ENCODE measurements at regions of chr12 and their contacts with region 1.

Region 1: GRCh38 chr12:48618541-48618940 is 48.7 kb upstream of the LALBA start:
- DNase-seq: peak; percentile 79
- H3K4me3 Mint-ChIP-seq: no peak overlapping the region
- H3K27ac Mint-ChIP-seq: no peak overlapping the region
- H3K4me1 Mint-ChIP-seq: no peaks in the 10 kb centered on the region
- H3K27me3 Mint-ChIP-seq: peaks cover 61% of the 10 kb centered on the region
- CTCF ChIP-seq: peak; percentile 91

Region 2: GRCh38 chr12:48084066-48084465 is 534.5 kb before region 1 on chr12:
- CTCF ChIA-PET with region 1: interaction called, 3 read pairs
- POLR2A ChIA-PET with region 1: no interaction called
- intact Hi-C with region 1: loop called (anchors 10 kb)
- DNase-seq: peak; percentile 6
- H3K4me3 Mint-ChIP-seq: no peak overlapping the region
- H3K27ac Mint-ChIP-seq: no peak overlapping the region
- H3K4me1 Mint-ChIP-seq: no peaks in the 10 kb centered on the region
- H3K27me3 Mint-ChIP-seq: no peaks in the 10 kb centered on the region
- CTCF ChIP-seq: no peak

Region 3: DNA sequence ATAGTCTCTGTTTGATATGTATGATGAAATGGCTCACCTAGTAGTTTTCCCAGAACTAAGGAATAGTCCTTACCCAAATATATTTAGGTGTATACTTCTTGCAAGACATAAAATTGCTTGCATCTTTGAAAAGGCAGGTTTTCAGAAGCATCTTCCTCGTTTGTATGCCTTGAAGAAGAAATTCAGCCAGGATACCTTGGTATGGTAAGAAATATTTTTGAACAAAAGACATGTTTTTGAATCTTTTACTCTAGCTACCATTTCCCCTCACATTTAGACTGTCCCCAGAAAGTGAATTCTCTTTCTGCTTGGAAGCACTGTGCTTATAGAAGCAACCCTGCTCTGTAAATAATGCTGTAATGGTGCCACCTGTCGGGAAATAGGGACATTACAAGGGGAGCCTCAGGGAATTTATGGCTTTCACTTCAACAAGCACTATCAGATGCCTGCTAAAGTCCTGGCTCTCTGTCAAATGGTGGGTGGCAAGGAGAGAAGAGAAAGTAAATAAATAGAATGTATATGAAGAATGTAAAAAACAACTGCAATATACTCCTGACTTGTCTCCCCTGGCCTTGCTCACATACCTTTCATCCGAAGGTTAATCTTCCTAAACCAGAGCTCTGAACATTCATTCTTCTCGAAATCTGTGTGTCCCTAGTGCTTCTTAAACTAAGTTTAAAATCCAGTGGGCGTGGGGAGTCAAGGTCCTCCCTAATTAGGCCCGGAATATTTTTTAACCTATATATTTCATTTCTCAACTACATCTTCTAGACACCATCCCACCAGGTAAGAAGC is 429.0 kb before region 1 on chr12:
- CTCF ChIA-PET with region 1: interaction called, 6 read pairs
- POLR2A ChIA-PET with region 1: no interaction called
- intact Hi-C with region 1: loop called (anchors 5 kb)
- DNase-seq: peak; percentile 78
- H3K4me3 Mint-ChIP-seq: no peak overlapping the region
- H3K27ac Mint-ChIP-seq: no peak overlapping the region
- H3K4me1 Mint-ChIP-seq: peaks cover 5% of the 10 kb centered on the region
- H3K27me3 Mint-ChIP-seq: peaks cover 67% of the 10 kb centered on the region
- CTCF ChIP-seq: peak; percentile 78

Region 4: DNA sequence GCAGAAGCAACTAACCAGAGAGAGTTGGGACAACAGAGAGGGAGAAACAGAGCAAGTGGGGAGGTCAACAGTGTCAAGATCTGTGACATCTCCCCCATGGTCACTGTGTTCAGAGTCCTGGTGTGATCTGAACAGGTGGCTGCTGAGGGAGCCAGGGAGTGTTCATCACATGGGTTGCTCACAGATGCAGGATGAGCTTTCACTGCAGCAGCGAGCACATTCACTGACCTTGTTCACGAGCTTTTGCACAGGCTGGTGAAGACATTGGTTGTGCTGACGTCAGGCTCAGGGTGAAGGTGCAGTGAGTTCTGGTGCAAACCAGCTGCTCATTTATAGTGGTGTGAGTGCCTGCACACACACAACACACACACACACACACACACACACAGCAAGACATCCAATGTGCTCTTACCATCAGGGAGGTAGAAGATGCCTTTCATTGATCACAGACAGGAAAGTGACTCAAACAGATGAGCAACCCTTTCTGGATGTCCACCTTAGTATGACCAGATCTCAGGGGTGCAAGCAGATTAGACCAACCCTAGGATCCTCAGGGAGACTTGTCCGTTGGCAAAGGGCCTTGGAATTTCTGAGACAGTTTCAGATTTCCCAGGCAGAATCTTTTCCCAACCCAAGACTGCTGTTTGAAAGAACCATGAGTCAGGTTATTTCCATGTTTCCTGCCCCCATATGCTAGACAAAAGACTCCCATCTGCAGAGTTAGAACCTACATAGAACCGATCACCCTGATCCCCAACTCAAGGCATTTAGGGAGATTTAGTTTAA is 371.2 kb before region 1 on chr12:
- CTCF ChIA-PET with region 1: interaction called, 3 read pairs
- POLR2A ChIA-PET with region 1: no interaction called
- intact Hi-C with region 1: loop called (anchors 2 kb)
- DNase-seq: no peak
- H3K4me3 Mint-ChIP-seq: no peak overlapping the region
- H3K27ac Mint-ChIP-seq: no peak overlapping the region
- H3K4me1 Mint-ChIP-seq: no peaks in the 10 kb centered on the region
- H3K27me3 Mint-ChIP-seq: peaks cover 86% of the 10 kb centered on the region
- CTCF ChIP-seq: no peak

Region 5: GRCh38 chr12:48542300-48542928 is 76.1 kb before region 1 on chr12:
- CTCF ChIA-PET with region 1: interaction called, 79 read pairs
- POLR2A ChIA-PET with region 1: interaction called, 6 read pairs
- intact Hi-C with region 1: loop called (anchors 1 kb)
- DNase-seq: peak; percentile 73
- H3K4me3 Mint-ChIP-seq: no peak overlapping the region
- H3K27ac Mint-ChIP-seq: no peak overlapping the region
- H3K4me1 Mint-ChIP-seq: peaks cover 6% of the 10 kb centered on the region
- H3K27me3 Mint-ChIP-seq: peaks cover 18% of the 10 kb centered on the region
- CTCF ChIP-seq: peak; percentile 65

Region 6: DNA sequence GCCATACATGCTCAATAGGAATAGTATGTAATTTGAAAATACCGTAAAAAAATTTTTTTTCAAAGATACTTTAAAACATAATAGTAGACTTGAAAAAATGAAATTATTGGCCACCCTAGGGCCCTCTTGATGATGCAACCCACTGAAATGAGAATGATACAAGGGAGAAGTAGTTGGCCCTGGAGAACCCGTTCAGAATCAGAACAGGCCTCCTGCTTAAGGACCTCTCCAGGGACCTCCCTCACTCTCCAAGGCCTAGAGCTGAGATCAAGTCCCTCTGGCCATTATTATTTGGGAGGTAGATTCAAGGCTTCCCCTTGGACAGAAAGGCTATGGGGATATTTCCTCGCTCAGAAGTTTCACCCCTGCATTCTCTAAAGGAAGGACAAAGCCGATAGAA is 60.6 kb before region 1 on chr12:
- CTCF ChIA-PET with region 1: no interaction called
- POLR2A ChIA-PET with region 1: no interaction called
- intact Hi-C with region 1: no loop called
- DNase-seq: no peak
- H3K4me3 Mint-ChIP-seq: no peak overlapping the region
- H3K27ac Mint-ChIP-seq: no peak overlapping the region
- H3K4me1 Mint-ChIP-seq: no peaks in the 10 kb centered on the region
- H3K27me3 Mint-ChIP-seq: peaks cover 4% of the 10 kb centered on the region
- CTCF ChIP-seq: no peak

Measured in MCF 10A (cell line).